Activated CD4-positive, alpha-beta memory T cell treated with anti-CD3 and anti-CD28 coated beads for 36 hours (primary cell): ENCODE measurements at regions of chr19 and their contacts with region 1.

Region 1: GRCh38 chr19:35352448-35353304 is 5.0 kb downstream of the FFAR1 start:
- DNase-seq: peak; percentile 84
- H3K4me3 Mint-ChIP-seq: no peak overlapping the region
- H3K27ac Mint-ChIP-seq: peak overlapping the region; percentile 42
- H3K4me1 Mint-ChIP-seq: peaks cover 30% of the 10 kb centered on the region
- H3K27me3 Mint-ChIP-seq: peaks cover 9% of the 10 kb centered on the region

Region 2: GRCh38 chr19:35468637-35469036 is 116.0 kb after region 1 on chr19:
- CTCF ChIA-PET with region 1: interaction called, 101 read pairs
- POLR2A ChIA-PET with region 1: interaction called, 4 read pairs
- intact Hi-C with region 1: loop called (anchors 1 kb)
- DNase-seq: peak; percentile 77
- H3K4me3 Mint-ChIP-seq: no peak overlapping the region
- H3K27ac Mint-ChIP-seq: peak overlapping the region; percentile 20
- H3K4me1 Mint-ChIP-seq: peaks cover 7% of the 10 kb centered on the region
- H3K27me3 Mint-ChIP-seq: no peaks in the 10 kb centered on the region

Region 3: DNA sequence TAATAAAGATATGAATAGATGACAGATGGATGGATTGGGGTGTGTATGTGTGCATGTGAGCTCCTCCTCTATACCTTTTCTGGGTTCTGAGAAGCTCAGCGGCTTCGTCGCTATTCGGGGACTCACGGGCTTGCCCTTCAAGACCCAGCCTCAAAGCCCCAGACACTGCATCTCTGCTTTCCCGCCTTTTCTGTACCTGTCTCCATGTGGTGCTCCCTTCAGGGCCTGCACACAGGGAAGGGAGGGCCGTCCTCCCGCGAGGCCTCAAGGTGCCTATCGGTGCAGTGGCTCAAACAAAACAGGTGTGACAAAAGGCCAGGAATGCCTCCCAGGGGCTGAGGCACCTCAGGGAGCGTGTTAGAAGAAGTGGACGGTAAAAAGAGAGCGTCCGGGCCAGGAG is 121.4 kb after region 1 on chr19:
- CTCF ChIA-PET with region 1: interaction called, 101 read pairs
- POLR2A ChIA-PET with region 1: interaction called, 3 read pairs
- intact Hi-C with region 1: no loop called
- DNase-seq: no peak
- H3K4me3 Mint-ChIP-seq: no peak overlapping the region
- H3K27ac Mint-ChIP-seq: no peak overlapping the region
- H3K4me1 Mint-ChIP-seq: no peaks in the 10 kb centered on the region
- H3K27me3 Mint-ChIP-seq: no peaks in the 10 kb centered on the region

Region 4: DNA sequence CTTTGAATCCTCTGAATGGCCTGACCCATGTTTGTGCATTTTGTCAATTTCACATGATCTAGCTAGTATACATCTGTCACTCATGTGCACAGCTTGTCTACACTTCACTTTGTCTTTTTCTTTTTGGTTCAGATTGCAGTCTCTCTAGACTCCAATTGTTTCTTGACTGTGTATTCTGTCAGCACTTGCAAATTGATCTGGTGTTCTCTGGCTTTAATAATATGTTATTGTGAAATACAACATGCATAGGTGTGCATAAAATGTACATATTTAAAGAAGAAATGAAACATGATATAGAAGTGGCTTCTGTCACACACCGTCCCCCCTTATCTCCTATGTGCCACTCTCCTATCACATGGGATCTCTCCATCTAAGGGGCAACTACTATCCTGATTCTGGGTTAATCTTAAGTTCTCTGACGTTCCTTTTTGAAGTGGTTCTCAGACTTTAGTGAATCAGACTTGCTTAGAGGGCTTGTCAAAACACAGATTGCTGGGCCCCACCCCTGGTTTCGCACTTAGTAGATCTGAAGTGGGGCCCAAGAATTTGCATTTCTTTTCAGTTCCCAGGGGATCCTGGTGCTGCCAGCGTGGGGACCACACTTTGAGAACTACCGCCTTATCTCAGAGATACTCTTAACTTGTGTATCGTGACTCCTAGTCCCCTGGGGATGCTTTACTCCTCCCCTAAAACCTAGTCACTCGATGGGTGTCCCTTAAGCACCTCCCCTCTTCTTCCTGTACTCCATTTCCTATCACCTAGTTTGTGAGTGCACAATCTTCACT is 131.8 kb after region 1 on chr19:
- CTCF ChIA-PET with region 1: interaction called, 14 read pairs
- POLR2A ChIA-PET with region 1: no interaction called
- intact Hi-C with region 1: no loop called
- DNase-seq: peak; percentile 47
- H3K4me3 Mint-ChIP-seq: no peak overlapping the region
- H3K27ac Mint-ChIP-seq: peak overlapping the region; percentile 23
- H3K4me1 Mint-ChIP-seq: peaks cover 11% of the 10 kb centered on the region
- H3K27me3 Mint-ChIP-seq: no peaks in the 10 kb centered on the region